Caco-2 (cell line): ENCODE measurements at regions of chr15 and their contacts with region 1.

Region 1: GRCh38 chr15:40952901-40953712 is at the start of gene CHAC1:
- DNase-seq: peak; percentile 97 to 98
- H3K4me3 ChIP-seq: peak within 1 kb of the TSS; percentile 94
- H3K4me3 Mint-ChIP-seq: peak within 1 kb of the TSS; percentile 89
- H3K27ac Mint-ChIP-seq: peak within 1 kb of the TSS; percentile 99
- H3K4me1 ChIP-seq: no peaks in the 10 kb centered on the region
- H3K4me1 Mint-ChIP-seq: peaks cover 15% of the 10 kb centered on the region
- H3K27me3 ChIP-seq: no peaks in the 10 kb centered on the region
- H3K27me3 Mint-ChIP-seq: no peaks in the 10 kb centered on the region
- CTCF ChIP-seq: no peak
- total RNA-seq, gene CHAC1: 54.0 and 55.8 TPM in 2 replicates

Region 2: GRCh38 chr15:40807028-40807887 is 145.8 kb before region 1 on chr15 and contains the starts of genes DNAJC17 and ZFYVE19:
- CTCF ChIA-PET with region 1: no interaction called
- POLR2A ChIA-PET with region 1: no interaction called
- intact Hi-C with region 1: no loop called
- DNase-seq: peak; percentile 96 to 97
- H3K4me3 ChIP-seq: peak within 1 kb of the TSS; percentile 88
- H3K4me3 Mint-ChIP-seq: peak within 1 kb of the TSS; percentile 95
- H3K27ac Mint-ChIP-seq: peak within 1 kb of the TSS; percentile 94
- H3K4me1 ChIP-seq: 0 out of 2 replicates have a peak, but pooled peaks cover 4% of the 10 kb centered on the region
- H3K4me1 Mint-ChIP-seq: no peaks in the 10 kb centered on the region
- H3K27me3 ChIP-seq: no peaks in the 10 kb centered on the region
- H3K27me3 Mint-ChIP-seq: no peaks in the 10 kb centered on the region
- CTCF ChIP-seq: no peak
- total RNA-seq, gene DNAJC17: 26.3 and 30.1 TPM in 2 replicates
- total RNA-seq, gene ZFYVE19: 26.7 and 26.9 TPM in 2 replicates

Region 3: GRCh38 chr15:40941528-40942336 is 11.4 kb before region 1 on chr15:
- CTCF ChIA-PET with region 1: interaction called, 26 read pairs
- POLR2A ChIA-PET with region 1: interaction called, 33 read pairs
- intact Hi-C with region 1: loop called (anchors 1 kb)
- DNase-seq: peak; percentile 86 to 90
- H3K4me3 ChIP-seq: peak overlapping the region; percentile 56
- H3K4me3 Mint-ChIP-seq: peak overlapping the region; percentile 79
- H3K27ac Mint-ChIP-seq: peak overlapping the region; percentile 95
- H3K4me1 ChIP-seq: peaks cover 12% of the 10 kb centered on the region
- H3K4me1 Mint-ChIP-seq: no peaks in the 10 kb centered on the region
- H3K27me3 ChIP-seq: no peaks in the 10 kb centered on the region
- H3K27me3 Mint-ChIP-seq: no peaks in the 10 kb centered on the region
- CTCF ChIP-seq: peak; percentile 16 to 60

Region 4: GRCh38 chr15:40974879-40975278 is 21.8 kb after region 1 on chr15:
- CTCF ChIA-PET with region 1: no interaction called
- POLR2A ChIA-PET with region 1: interaction called, 4 read pairs
- intact Hi-C with region 1: loop called (anchors 2 kb)
- DNase-seq: no peak
- H3K4me3 ChIP-seq: no peak overlapping the region
- H3K4me3 Mint-ChIP-seq: no peak overlapping the region
- H3K27ac Mint-ChIP-seq: no peak overlapping the region
- H3K4me1 ChIP-seq: 0 out of 2 replicates have a peak, but pooled peaks cover 3% of the 10 kb centered on the region
- H3K4me1 Mint-ChIP-seq: peaks cover 9% of the 10 kb centered on the region
- H3K27me3 ChIP-seq: no peaks in the 10 kb centered on the region
- H3K27me3 Mint-ChIP-seq: no peaks in the 10 kb centered on the region
- CTCF ChIP-seq: peak in 1 of 2 experiments; percentile 17

Region 5: DNA sequence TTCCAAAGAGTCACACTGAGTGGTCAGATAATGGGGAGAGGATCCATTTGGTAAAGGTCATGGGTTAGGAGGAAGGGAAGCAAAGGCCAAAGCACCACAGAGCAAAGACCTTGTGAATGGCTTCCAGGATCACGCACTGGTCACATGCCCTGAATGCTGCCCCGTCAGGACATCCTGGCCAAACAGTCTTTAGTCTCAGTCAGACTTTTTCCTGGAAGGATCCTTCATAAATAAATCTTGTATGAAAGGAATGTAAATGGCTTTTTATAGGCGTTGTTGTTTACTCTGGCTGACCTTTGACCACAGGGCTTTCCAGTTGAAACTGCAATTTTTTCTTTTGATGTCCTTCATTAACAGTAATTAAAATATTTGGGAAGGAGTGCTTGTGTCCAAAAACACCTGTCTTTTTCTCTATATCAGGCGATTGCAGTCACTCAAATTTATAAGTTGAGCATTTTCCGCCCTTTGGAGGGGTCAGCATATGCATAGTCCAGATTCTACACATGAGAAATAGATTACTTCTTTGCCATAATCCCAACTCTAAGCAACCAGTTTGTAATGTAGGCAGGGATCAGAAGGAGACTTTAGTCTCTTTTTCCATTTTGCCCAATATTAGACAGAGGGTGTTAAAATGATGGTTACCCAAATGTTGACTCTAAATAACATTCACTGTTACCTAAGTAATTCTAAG is 48.6 kb after region 1 on chr15:
- CTCF ChIA-PET with region 1: no interaction called
- POLR2A ChIA-PET with region 1: no interaction called
- intact Hi-C with region 1: loop called (anchors 5 kb)
- DNase-seq: peak; percentile 58 to 67
- H3K4me3 ChIP-seq: no peak overlapping the region
- H3K4me3 Mint-ChIP-seq: no peak overlapping the region
- H3K27ac Mint-ChIP-seq: peak overlapping the region; percentile 3
- H3K4me1 ChIP-seq: peaks cover 25% of the 10 kb centered on the region
- H3K4me1 Mint-ChIP-seq: no peaks in the 10 kb centered on the region
- H3K27me3 ChIP-seq: no peaks in the 10 kb centered on the region
- H3K27me3 Mint-ChIP-seq: no peaks in the 10 kb centered on the region
- CTCF ChIP-seq: no peak

Region 6: DNA sequence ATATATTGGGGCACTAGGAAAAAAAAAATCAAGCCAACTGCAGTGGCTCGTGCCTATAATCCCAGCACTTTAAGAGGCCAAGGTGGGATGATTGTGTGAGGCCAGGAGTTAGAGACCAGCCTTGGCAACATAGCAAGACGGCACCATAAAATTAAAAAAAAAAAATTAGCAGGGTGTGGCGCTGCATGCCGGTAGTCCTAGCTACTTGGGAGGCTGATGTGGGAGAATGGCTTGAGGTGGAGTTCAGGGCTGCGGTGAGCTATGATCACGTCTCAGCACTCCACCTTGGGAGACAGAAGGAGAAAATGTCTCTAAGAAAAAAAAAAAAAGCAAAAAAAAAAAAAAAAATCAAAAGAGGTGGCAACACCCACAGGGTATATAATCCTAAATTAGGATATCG is 113.4 kb after region 1 on chr15:
- CTCF ChIA-PET with region 1: no interaction called
- POLR2A ChIA-PET with region 1: no interaction called
- intact Hi-C with region 1: no loop called
- DNase-seq: no peak
- H3K4me3 ChIP-seq: no peak overlapping the region
- H3K4me3 Mint-ChIP-seq: no peak overlapping the region
- H3K27ac Mint-ChIP-seq: no peak overlapping the region
- H3K4me1 ChIP-seq: no peaks in the 10 kb centered on the region
- H3K4me1 Mint-ChIP-seq: no peaks in the 10 kb centered on the region
- H3K27me3 ChIP-seq: no peaks in the 10 kb centered on the region
- H3K27me3 Mint-ChIP-seq: no peaks in the 10 kb centered on the region
- CTCF ChIP-seq: no peak